PC-9 (cell line): ENCODE measurements at regions of chr2 and their contacts with region 1.

Region 1: GRCh38 chr2:212940816-212941215 is 210.6 kb downstream of the IKZF2 start:
- DNase-seq: peak; percentile 64 to 90
- H3K4me3 ChIP-seq: no peak overlapping the region
- H3K27ac ChIP-seq: peak overlapping the region; percentile 76
- H3K4me1 ChIP-seq: peaks cover 24% of the 10 kb centered on the region
- H3K27me3 ChIP-seq: no peaks in the 10 kb centered on the region
- CTCF ChIP-seq: no peak

Region 2: DNA sequence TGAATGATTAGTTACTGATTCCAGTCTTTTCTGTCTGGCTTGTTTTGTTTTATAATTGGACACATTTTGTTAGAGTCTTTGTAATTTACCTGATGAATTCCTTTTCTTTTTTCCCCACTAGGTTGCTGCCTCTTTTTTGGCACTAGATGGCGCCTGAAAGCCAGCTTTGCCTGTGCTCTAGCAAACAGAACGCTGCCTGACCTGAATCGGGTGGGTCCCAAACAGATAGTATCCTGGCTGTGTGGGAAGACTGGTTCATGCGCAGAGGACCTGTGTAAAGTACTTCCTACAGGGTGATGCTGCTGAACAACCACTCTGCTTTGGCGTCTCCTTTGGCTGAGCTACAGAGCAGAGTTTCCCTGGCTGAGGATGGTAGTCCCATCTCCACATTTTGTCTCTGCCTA is 77.6 kb before region 1 on chr2:
- CTCF ChIA-PET with region 1: no interaction called
- POLR2A ChIA-PET with region 1: no interaction called
- intact Hi-C with region 1: loop called (anchors 1 kb)
- DNase-seq: peak; percentile 32 to 48
- H3K4me3 ChIP-seq: no peak overlapping the region
- H3K27ac ChIP-seq: no peak overlapping the region
- H3K4me1 ChIP-seq: no peaks in the 10 kb centered on the region
- H3K27me3 ChIP-seq: no peaks in the 10 kb centered on the region
- CTCF ChIP-seq: peak; percentile 69

Region 3: DNA sequence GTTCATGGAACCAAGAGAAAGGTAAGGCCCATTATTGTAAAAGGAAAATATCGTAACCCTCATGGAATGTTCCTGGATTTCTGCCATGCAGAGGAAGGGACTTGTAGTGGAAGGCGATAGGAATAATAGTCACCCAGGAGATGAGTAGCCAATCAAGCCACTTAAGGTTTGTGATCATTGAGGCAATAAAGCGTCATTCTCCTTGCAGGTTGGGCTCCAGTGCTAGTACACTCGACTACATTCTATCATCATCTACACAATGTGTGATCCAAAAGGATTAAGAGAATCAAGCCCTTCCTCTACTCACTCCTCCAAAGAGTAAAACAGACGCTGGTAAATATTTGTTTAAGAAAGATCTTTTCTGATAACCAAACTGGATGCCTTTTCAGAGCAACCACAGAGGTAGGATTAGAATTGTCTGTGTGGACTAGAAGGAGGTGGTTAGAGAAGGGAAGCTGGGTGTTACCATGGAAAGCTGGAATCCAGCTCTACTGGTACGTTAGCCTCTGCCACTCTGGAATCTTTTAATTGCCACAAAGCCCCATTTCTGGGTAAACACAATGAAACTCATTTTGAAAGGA is 35.1 kb before region 1 on chr2:
- CTCF ChIA-PET with region 1: interaction called, 4 read pairs
- POLR2A ChIA-PET with region 1: no interaction called
- intact Hi-C with region 1: loop called (anchors 1 kb)
- DNase-seq: peak; percentile 54 to 96
- H3K4me3 ChIP-seq: peak overlapping the region; percentile 44; the same call in 1 of the 2 replicates
- H3K27ac ChIP-seq: peak overlapping the region; percentile 99
- H3K4me1 ChIP-seq: peaks cover 71% of the 10 kb centered on the region
- H3K27me3 ChIP-seq: no peaks in the 10 kb centered on the region
- CTCF ChIP-seq: no peak

Region 4: DNA sequence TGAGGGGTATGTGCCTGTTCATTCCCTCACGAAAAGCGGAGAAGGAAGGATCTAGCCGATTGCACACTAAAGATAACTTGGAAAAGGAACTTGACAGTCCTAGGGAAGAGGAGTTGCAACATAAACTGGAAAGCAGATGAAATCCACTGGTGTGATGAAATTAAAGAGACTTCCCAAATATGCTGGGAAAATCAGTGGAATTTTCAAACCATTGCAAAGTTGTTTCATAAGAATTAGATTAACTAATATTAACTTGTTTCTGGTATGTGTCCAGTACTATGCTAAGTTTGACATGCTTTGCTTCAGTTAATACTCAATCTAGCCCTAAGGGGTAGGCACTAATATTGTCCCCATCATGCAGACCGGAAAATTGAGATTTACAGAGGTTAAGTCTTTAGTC is 12.1 kb before region 1 on chr2:
- CTCF ChIA-PET with region 1: no interaction called
- POLR2A ChIA-PET with region 1: no interaction called
- intact Hi-C with region 1: loop called (anchors 1 kb)
- DNase-seq: no peak
- H3K4me3 ChIP-seq: no peak overlapping the region
- H3K27ac ChIP-seq: peak overlapping the region; percentile 69
- H3K4me1 ChIP-seq: peaks cover 17% of the 10 kb centered on the region
- H3K27me3 ChIP-seq: no peaks in the 10 kb centered on the region
- CTCF ChIP-seq: no peak